ENCODE measurements at regions of chr10 and their contacts with region 1.

Region 1: DNA sequence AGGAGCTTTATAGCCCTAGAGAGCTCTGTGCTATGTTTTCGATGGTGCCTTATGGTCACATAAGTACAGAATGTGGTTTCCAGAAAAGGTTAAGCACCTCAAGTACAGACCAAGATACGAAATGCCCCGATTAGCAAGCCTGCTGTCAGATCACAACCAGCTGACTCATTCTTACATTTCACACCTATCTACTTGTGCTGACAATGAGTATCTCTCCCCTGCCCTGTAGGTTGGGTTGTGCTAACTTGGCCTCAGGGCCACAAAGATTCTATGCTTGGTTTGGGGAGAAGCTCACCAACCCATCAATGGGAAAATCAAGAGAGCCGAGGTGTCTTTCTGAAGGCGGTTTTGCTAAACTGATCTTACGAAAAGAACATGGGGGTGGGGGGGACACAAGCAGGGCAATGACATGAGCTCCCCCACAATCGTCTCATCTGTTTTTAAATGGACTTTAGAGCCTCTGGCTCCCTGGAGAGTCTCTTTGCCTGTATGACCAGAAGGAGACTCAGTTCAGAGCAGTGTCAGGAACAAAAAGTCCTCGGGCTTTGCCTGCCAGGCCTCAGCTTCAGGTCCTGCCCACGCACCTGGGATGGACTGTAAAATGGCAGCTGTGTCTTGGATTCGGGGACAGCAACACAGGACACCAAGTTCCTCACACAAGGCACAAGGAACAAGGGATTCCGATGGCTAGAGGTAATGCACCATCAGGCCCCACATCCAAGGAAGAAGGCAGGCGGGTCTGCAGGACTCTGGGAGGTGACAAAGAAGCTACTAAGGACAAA is 55.1 kb downstream of the FAM53B start:
- DNase-seq: peak in 1 of 2 donors; percentile 77
- ATAC-seq: peak in 3 of 4 donors; percentile 49 to 70 (median 55)
- H3K4me3 ChIP-seq: no peak overlapping the region
- H3K27ac ChIP-seq: peak overlapping the region; percentile 70
- H3K4me1 ChIP-seq: peaks cover 79% of the 10 kb centered on the region
- H3K27me3 ChIP-seq: no peaks in the 10 kb centered on the region
- CTCF ChIP-seq: no peak

Region 2: DNA sequence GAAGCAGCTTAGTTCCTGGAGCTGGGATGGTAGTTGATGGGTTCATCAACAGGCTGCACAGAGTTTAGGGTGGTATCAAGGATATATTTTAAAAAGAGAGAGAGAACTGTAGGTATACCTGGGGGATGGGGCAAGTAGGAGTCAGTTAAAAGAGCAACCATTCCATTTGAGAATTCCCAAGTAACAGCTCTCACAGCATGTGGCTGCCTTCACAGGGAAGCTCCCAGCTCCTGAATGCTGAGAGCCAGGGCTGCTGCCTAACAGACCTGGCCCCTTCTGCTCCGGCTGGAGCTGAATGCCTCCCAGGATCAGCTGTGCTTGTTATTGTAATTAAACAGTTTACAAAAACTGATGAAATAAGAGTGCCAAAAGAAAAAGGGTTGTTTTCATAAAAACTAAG is 1081.7 kb before region 1 on chr10:
- intact Hi-C with region 1: no loop called
- DNase-seq: no peak
- ATAC-seq: no peak
- H3K4me3 ChIP-seq: no peak overlapping the region
- H3K27ac ChIP-seq: no peak overlapping the region
- H3K4me1 ChIP-seq: no peaks in the 10 kb centered on the region
- H3K27me3 ChIP-seq: peaks cover 0 to 14% (median 4%) of the 10 kb centered on the region in 3 donors
- CTCF ChIP-seq: no peak

Region 3: DNA sequence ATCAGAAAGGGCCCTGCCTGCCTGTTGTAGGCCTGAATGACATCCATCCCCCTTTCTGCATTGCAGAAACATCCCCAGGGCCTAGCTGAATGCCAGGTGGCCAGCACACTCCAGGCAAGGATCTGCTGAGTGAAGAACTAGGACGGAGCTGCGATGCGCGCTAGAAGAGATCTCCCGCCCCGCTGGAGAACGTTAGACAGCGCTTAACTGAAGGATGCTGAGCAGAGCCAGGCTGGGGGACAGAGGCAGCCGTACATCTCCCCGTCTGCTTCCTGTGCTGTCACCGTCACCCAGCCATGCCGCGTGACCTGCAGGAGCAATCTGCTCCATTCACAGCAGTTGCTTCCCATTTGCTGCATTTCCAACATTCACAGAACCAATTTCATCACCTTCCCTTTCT is 18.2 kb before region 1 on chr10:
- intact Hi-C with region 1: loop called in 1 of 2 experiments (anchors 1 kb)
- DNase-seq: peak in 1 of 2 donors; percentile 16
- ATAC-seq: no peak
- H3K4me3 ChIP-seq: no peak overlapping the region
- H3K27ac ChIP-seq: peak overlapping the region; percentile 58
- H3K4me1 ChIP-seq: peaks cover 87% of the 10 kb centered on the region
- H3K27me3 ChIP-seq: no peaks in the 10 kb centered on the region
- CTCF ChIP-seq: no peak

Region 4: GRCh38 chr10:125489731-125490130 is 800.7 kb after region 1 on chr10:
- intact Hi-C with region 1: no loop called
- DNase-seq: no peak
- ATAC-seq: no peak
- H3K4me3 ChIP-seq: no peak overlapping the region
- H3K27ac ChIP-seq: no peak overlapping the region
- H3K4me1 ChIP-seq: no peaks in the 10 kb centered on the region
- H3K27me3 ChIP-seq: peaks cover 0 to 14% (median 2%) of the 10 kb centered on the region in 3 donors
- CTCF ChIP-seq: no peak